GM10248 (cell line): ENCODE measurements at regions of chr2 and their contacts with region 1.

Region 1: GRCh38 chr2:59025157-59025757 is 784.1 kb upstream of the FANCL start:
- DNase-seq: peak; percentile 24
- CTCF ChIP-seq: peak; percentile 77

Region 2: GRCh38 chr2:58870704-58871103 is 154.6 kb before region 1 on chr2:
- CTCF ChIA-PET with region 1: no interaction called
- POLR2A ChIA-PET with region 1: no interaction called
- DNase-seq: no peak
- CTCF ChIP-seq: no peak

Region 3: DNA sequence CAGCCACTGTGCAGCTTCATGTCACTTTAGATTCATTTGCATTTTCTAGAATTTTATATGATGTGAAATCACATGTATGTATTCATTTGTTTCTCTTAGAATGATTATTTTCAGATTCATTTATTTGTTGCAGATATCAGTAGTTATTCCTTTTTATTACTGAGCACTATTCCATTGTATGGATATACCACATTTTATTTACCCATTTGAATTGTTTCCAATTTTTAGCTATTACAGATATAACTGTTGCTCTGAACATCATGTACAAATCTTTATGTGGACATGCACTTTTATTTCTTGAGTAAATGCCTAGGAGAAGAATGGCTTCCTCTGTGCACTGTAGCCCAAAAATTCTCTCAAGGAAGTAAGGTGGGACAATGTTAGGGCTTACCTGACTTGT is 16.3 kb before region 1 on chr2:
- CTCF ChIA-PET with region 1: interaction called, 14 read pairs
- POLR2A ChIA-PET with region 1: no interaction called
- DNase-seq: no peak
- CTCF ChIP-seq: no peak

Region 4: GRCh38 chr2:59015027-59015426 is 10.2 kb before region 1 on chr2:
- CTCF ChIA-PET with region 1: interaction called, 14 read pairs
- POLR2A ChIA-PET with region 1: no interaction called
- DNase-seq: no peak
- CTCF ChIP-seq: no peak

Region 5: GRCh38 chr2:59047373-59047995 is 22.2 kb after region 1 on chr2:
- CTCF ChIA-PET with region 1: interaction called, 10 read pairs
- POLR2A ChIA-PET with region 1: no interaction called
- DNase-seq: no peak
- CTCF ChIP-seq: no peak

Region 6: DNA sequence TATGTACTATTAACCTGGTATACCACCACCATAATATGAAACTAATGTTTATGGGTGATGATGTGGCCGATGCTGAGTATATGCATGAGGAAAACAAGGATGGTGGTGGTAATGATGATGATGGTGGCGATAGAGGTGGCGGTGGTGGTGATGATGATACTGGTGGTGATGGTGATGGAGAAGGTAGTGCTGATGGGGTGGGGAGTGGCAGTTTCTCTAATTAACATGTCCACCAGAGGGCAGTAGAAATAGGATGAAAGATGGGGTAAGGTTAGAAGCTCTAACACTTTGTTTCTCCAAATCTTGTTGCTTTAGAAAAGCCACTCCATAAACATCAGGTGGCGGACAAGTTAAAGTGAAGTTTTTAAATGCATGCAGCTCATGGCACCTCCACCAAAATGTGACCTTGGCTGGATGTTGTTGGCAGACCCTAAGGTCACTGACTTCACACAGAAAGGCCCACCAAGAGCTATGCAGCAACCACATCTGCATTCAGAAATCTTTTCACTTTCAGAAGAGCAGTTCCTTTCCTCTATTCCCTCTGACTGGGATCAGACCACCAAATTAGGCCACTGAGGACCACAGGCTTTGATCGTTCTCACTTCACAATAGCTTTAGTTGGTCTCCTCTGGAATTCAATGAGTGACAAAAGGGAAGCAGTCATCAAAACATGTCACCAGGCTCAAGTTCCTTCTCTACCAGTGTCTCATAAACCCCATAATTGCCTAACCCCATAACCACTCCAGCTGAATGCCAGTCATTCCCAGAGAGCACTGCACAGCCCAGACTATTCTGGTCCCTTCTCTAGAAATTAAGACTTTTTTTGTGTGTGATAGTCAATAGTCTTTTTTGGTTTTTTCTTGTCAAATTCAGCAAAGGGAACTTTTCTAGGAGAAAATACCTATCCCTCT is 1535.7 kb after region 1 on chr2:
- CTCF ChIA-PET with region 1: interaction called, 10 read pairs
- POLR2A ChIA-PET with region 1: no interaction called
- DNase-seq: peak; percentile 41
- CTCF ChIP-seq: peak; percentile 62